PC-9 (cell line): ENCODE measurements at regions of chr12 and their contacts with region 1.

Region 1: DNA sequence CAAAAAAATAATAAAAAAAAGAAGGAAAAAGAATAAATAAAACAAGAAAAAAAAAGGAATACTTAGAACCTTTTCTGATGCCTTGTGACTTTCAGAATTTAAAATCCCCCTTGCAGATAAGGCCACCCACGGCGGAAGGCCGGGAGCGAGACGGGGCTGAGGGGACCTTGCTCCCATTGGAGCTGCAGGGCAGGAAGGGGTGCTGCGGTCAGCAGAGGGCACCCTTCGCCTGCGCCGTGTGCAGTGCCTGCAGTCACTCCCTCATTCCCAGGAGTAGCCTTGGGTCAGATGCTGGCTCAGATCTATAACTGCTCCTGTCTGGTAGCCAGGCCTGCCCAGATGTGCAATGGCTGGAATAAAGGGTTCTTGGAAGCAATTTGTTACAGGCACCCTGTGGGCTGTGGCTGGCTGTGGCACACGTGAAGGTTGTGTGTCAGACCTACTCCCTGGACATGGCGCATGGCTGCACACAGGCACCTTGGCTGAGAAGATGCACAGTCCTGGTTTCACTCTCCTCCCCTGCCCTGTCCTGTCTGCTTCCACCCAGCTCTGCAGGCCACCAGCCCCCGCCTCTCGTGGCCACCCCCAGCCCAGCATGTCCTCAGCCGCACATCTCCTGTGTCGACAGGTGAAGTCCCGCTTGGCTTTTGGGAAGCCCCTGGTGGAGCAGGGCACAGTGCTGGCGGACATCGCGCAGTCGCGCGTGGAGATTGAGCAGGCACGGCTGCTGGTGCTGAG is 13.4 kb upstream of the ALDH2 start:
- DNase-seq: no peak
- H3K4me3 ChIP-seq: no peak overlapping the region
- H3K27ac ChIP-seq: no peak overlapping the region
- H3K4me1 ChIP-seq: no peaks in the 10 kb centered on the region
- H3K27me3 ChIP-seq: no peaks in the 10 kb centered on the region
- CTCF ChIP-seq: peak; percentile 59

Region 2: DNA sequence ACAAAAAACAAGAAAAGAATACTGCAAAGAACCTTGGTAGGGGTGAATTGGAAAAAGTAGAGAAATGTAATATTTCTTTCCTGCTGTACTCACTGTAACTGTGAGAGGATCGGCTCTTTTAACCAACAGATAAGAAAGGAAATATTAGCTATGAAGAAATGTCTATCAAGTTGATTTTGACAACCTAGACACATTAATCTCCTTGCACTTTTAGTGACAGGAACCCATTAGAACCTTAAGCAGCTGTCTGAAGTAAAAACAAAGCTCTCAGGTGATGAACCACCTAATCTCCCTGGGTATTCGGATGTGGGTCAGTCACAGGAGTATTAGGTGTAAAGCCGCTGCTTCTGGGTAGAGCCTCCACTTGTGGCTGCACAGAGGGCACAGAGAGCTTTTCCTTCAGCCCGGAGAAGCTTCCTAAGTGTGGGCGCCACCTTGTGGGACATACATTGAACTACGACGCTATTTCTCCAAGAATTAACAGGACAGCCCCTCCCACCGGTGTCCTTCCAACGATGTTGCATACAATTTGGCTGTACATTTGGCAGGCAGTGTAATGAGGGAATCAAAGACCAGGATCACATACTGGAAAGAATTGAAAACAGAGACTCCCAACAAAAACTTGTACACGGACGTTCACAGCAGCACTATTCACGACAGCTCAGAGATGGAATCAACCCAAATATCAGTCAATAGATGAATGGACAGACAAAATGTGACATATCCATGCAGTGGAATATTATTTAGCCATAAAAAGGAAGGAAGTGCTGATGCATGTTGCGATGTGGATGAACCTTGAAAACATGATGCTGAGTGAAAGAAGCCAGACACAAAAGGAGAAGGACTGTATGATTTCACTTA is 59.8 kb after region 1 on chr12:
- CTCF ChIA-PET with region 1: interaction called, 10 read pairs
- POLR2A ChIA-PET with region 1: no interaction called
- intact Hi-C with region 1: loop called (anchors 1 kb)
- DNase-seq: peak; percentile 59 to 69
- H3K4me3 ChIP-seq: no peak overlapping the region
- H3K27ac ChIP-seq: no peak overlapping the region
- H3K4me1 ChIP-seq: no peaks in the 10 kb centered on the region
- H3K27me3 ChIP-seq: peaks cover 4% of the 10 kb centered on the region; the same call in 1 of the 2 replicates
- CTCF ChIP-seq: peak; percentile 84